Naive thymus-derived CD4-positive, alpha-beta T cell (primary cell): ENCODE measurements at regions of chr3 and their contacts with region 1.

Region 1: GRCh38 chr3:43769471-43770425 is 79.0 kb downstream of the ABHD5 start:
- DNase-seq: peak; percentile 48 to 76 (median 68)
- ATAC-seq: peak; percentile 75
- H3K4me3 ChIP-seq: no peak overlapping the region
- H3K4me3 Mint-ChIP-seq: peak overlapping the region in 9 of 10 donors; percentile 0 to 66 (median 35)
- H3K27ac ChIP-seq: no peak overlapping the region
- H3K27ac Mint-ChIP-seq: peak overlapping the region in 2 of 9 donors; percentile 15 to 17
- H3K4me1 ChIP-seq: peaks cover 14 to 20% of the 10 kb centered on the region in 2 donors
- H3K4me1 Mint-ChIP-seq: peaks cover 5 to 20% (median 10%) of the 10 kb centered on the region in 7 donors
- H3K27me3 ChIP-seq: no peaks in the 10 kb centered on the region
- H3K27me3 Mint-ChIP-seq: peaks cover 0 to 21% (median 0%) of the 10 kb centered on the region in 5 donors

Region 2: DNA sequence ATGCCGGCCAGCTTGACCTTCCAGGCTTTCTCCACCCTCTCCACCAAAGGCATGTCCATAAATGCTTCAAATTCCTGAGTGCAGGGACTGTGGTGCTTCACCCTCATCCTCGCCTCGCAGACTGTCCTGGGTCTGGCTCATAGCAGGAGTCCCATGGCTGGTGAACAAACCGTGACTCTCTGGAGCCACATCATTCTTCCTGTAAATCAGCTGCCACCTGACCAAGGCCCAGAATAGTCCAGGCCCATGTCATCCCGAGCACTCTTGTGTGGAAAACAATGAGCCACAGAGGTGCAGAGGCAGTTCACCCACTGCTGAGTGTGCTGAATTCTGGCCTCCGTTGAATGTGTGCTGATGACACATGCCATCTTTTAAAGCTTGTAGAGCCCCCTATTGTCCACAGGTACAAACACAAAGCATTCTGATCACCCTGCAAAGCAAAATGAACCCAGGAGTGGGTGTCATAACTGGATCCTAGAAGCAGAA is 10.4 kb before region 1 on chr3:
- CTCF ChIA-PET with region 1: interaction called, 10 read pairs
- POLR2A ChIA-PET with region 1: interaction called, 11 read pairs
- intact Hi-C with region 1: loop called in 1 of 2 experiments (anchors 1 kb)
- DNase-seq: peak in 5 of 9 donors; percentile 2 to 30 (median 26)
- ATAC-seq: peak; percentile 34
- H3K4me3 ChIP-seq: no peak overlapping the region
- H3K4me3 Mint-ChIP-seq: peak overlapping the region in 1 of 10 donors; percentile 12
- H3K27ac ChIP-seq: no peak overlapping the region
- H3K27ac Mint-ChIP-seq: peak overlapping the region in 5 of 9 donors; percentile 56 to 97 (median 84)
- H3K4me1 ChIP-seq: peaks cover 8 to 41% of the 10 kb centered on the region in 2 donors
- H3K4me1 Mint-ChIP-seq: peaks cover 19 to 54% (median 51%) of the 10 kb centered on the region in 7 donors
- H3K27me3 ChIP-seq: no peaks in the 10 kb centered on the region
- H3K27me3 Mint-ChIP-seq: peaks cover 0 to 9% (median 0%) of the 10 kb centered on the region in 5 donors

Region 3: GRCh38 chr3:44065311-44066094 is 295.8 kb after region 1 on chr3:
- CTCF ChIA-PET with region 1: no interaction called
- POLR2A ChIA-PET with region 1: no interaction called
- intact Hi-C with region 1: no loop called
- DNase-seq: no peak
- ATAC-seq: no peak
- H3K4me3 ChIP-seq: no peak overlapping the region
- H3K4me3 Mint-ChIP-seq: no peak overlapping the region
- H3K27ac ChIP-seq: no peak overlapping the region
- H3K27ac Mint-ChIP-seq: no peak overlapping the region
- H3K4me1 ChIP-seq: no peaks in the 10 kb centered on the region
- H3K4me1 Mint-ChIP-seq: peaks cover 2 to 3% (median 2%) of the 10 kb centered on the region in 7 donors
- H3K27me3 ChIP-seq: no peaks in the 10 kb centered on the region
- H3K27me3 Mint-ChIP-seq: peaks cover 0 to 16% (median 6%) of the 10 kb centered on the region in 5 donors